ENCODE measurements at regions of chr7 and their contacts with region 1.

Region 1: GRCh38 chr7:142535123-142535779 is 214.0 kb upstream of the PRSS1 start:
- DNase-seq: peak; percentile 90
- ATAC-seq: peak; percentile 87
- H3K4me3 Mint-ChIP-seq: peak overlapping the region; percentile 63
- H3K27ac Mint-ChIP-seq: peak overlapping the region; percentile 77
- H3K4me1 Mint-ChIP-seq: peaks cover 30% of the 10 kb centered on the region
- H3K27me3 Mint-ChIP-seq: no peaks in the 10 kb centered on the region

Region 2: GRCh38 chr7:142313528-142313927 is 221.7 kb before region 1 on chr7:
- CTCF ChIA-PET with region 1: no interaction called
- POLR2A ChIA-PET with region 1: no interaction called
- intact Hi-C with region 1: no loop called
- DNase-seq: peak; percentile 63
- ATAC-seq: peak; percentile 82
- H3K4me3 Mint-ChIP-seq: peak overlapping the region; percentile 55
- H3K27ac Mint-ChIP-seq: peak overlapping the region; percentile 37
- H3K4me1 Mint-ChIP-seq: peaks cover 13% of the 10 kb centered on the region
- H3K27me3 Mint-ChIP-seq: peaks cover 13% of the 10 kb centered on the region

Region 3: GRCh38 chr7:142557971-142558582 is 22.8 kb after region 1 on chr7:
- CTCF ChIA-PET with region 1: interaction called, 33 read pairs
- POLR2A ChIA-PET with region 1: no interaction called
- intact Hi-C with region 1: no loop called
- DNase-seq: peak; percentile 76
- ATAC-seq: peak; percentile 80
- H3K4me3 Mint-ChIP-seq: peak overlapping the region; percentile 13
- H3K27ac Mint-ChIP-seq: no peak overlapping the region
- H3K4me1 Mint-ChIP-seq: peaks cover 2% of the 10 kb centered on the region
- H3K27me3 Mint-ChIP-seq: no peaks in the 10 kb centered on the region

Region 4: GRCh38 chr7:142603870-142604448 is 68.7 kb after region 1 on chr7:
- CTCF ChIA-PET with region 1: interaction called, 14 read pairs
- POLR2A ChIA-PET with region 1: no interaction called
- intact Hi-C with region 1: loop called in 1 of 2 experiments (anchors 5 kb)
- DNase-seq: peak; percentile 69
- ATAC-seq: peak; percentile 60
- H3K4me3 Mint-ChIP-seq: peak overlapping the region; percentile 31
- H3K27ac Mint-ChIP-seq: peak overlapping the region; percentile 67
- H3K4me1 Mint-ChIP-seq: peaks cover 23% of the 10 kb centered on the region
- H3K27me3 Mint-ChIP-seq: peaks cover 3% of the 10 kb centered on the region

Region 5: DNA sequence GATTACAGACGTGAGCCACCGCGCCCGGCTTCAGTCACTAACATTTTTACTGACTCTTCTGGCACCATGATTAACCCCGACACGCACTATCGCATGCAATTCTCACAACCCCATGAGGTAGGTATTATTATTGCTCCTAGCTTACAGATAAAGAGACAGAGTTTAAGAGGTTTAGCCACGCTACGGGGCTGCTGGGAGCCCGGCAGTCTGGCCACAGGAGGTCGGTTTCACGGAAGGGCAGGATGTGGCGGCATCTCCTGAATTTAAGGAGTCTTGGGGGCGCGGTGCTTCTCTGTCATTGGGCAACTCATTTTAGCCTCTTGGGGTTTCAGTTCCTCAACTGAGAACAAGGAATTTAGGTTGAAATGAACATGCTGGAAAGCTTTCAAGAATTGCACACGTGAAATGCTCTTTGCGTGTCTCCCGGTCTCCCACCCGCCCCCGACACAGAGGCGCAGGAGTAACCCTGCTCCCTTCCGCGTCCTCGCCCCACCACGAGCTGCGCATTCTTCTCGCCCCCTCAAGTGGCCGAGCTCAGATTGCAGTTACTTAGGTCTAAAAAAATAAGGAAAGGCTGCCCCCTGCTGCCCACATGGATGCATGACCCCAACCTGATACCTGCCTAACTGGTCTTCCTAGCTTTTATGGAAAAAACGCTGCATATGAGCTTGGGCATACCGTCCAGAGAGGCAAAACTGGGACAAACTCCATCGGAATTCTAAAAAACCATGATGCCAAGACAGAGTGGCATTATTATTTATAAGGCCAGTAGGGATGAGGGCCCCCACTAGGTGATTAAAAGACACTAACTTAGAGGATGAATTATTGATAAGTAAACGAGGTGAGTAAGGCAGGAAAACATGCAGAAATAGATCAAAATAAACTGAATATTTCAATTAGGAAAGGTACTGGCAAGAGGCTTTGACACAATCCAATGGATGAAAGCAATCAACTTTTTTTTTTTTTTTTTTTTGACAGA is 248.0 kb after region 1 on chr7:
- CTCF ChIA-PET with region 1: no interaction called
- POLR2A ChIA-PET with region 1: interaction called, 5 read pairs
- intact Hi-C with region 1: loop called (anchors 1 kb)
- DNase-seq: peak; percentile 87
- ATAC-seq: peak; percentile 50
- H3K4me3 Mint-ChIP-seq: peak overlapping the region; percentile 66
- H3K27ac Mint-ChIP-seq: peak overlapping the region; percentile 90
- H3K4me1 Mint-ChIP-seq: peaks cover 6% of the 10 kb centered on the region
- H3K27me3 Mint-ChIP-seq: no peaks in the 10 kb centered on the region

Region 6: DNA sequence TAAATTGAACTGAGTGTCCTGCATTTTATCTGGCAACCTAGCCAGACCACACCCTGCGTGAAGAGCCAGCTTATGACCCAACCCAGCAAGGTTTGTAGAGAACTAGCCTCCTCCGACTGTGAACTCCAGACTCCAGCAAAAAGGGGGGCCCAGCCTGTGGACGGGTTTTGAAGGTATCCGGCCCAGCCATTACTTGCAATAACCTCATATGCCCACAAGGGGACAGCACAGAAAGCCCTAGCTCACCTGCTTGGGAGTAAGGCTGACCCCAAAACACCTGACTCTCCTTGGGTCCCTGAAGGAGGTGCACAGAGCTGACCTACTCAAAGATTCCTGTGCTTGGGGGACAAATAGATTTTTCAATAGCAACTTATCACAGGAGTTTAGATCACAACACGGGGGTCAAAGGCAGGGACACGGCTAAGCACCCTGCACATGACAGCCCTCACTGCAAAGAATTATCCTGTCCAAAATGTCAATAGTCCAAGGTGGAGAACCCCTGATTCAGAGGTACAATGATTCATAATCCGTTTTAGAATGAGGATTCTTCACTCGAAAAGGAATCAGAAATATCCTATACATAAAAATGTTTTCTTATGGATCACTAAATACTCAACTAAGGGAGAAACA is 345.7 kb after region 1 on chr7:
- CTCF ChIA-PET with region 1: no interaction called
- POLR2A ChIA-PET with region 1: no interaction called
- intact Hi-C with region 1: loop called in 1 of 2 experiments (anchors 5 kb)
- DNase-seq: peak; percentile 67
- ATAC-seq: peak; percentile 88
- H3K4me3 Mint-ChIP-seq: no peak overlapping the region
- H3K27ac Mint-ChIP-seq: no peak overlapping the region
- H3K4me1 Mint-ChIP-seq: no peaks in the 10 kb centered on the region
- H3K27me3 Mint-ChIP-seq: peaks cover 4% of the 10 kb centered on the region

Measured in activated CD4-positive, alpha-beta T cell treated with anti-CD3 and anti-CD28 coated beads for 36 hours (primary cell).